H1 (cell line): ENCODE measurements at regions of chr3 and their contacts with region 1.

Region 1: GRCh38 chr3:52934630-52935530 is 37.5 kb upstream of the STIMATE start:
- DNase-seq: peak in 1 of 2 experiments; percentile 1
- H3K4me3 ChIP-seq: no peak overlapping the region
- H3K27ac ChIP-seq: no peak overlapping the region
- H3K4me1 ChIP-seq: no peaks in the 10 kb centered on the region
- H3K27me3 ChIP-seq: no peaks in the 10 kb centered on the region
- CTCF ChIP-seq: peak; percentile 55 to 84 (median 64)
- EP300 ChIP-seq: no peak
- POLR2A ChIP-seq: no peak
- RAD21 ChIP-seq: peak; percentile 51 to 59

Region 2: DNA sequence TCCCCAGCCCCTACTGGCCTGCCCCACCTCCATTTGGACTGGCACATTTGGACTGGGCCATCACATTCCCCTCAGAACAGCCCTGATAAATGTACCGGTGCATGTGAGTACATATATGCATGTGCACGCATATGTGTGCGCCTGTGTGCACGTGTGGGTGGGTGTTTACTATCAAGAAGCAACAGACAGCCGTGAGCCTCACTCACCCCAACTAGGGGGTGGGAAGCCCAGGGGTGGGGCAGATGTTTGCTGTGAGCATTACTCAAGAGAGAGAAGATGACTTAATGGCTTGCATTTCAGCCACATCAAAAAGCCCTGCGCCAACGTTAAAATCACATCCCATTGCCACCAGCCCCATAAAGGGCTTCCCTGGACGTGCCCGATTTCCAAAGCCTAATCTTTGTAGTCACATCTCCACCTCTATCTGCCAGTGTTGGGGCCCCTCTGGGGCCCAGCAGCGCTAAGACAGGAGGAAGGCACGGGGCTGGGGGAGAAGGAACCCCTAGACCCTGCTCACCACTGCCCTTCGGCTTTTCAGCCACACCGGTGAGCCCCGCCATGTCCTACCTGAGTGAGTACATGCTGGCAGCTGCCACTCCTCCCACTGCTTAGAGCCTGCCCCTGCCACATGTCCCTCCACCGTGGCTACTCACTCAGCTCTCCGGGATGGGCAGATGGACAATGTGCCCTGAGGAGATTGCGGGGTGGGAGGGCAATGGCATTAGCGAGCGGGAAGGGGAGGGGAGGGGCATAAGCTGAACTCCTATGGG is 129.4 kb before region 1 on chr3:
- CTCF ChIA-PET with region 1: no interaction called
- POLR2A ChIA-PET with region 1: no interaction called
- DNase-seq: no peak
- H3K4me3 ChIP-seq: no peak overlapping the region
- H3K27ac ChIP-seq: no peak overlapping the region
- H3K4me1 ChIP-seq: no peaks in the 10 kb centered on the region
- H3K27me3 ChIP-seq: no peaks in the 10 kb centered on the region; a peak in 1 of 7 replicates
- CTCF ChIP-seq: no peak
- EP300 ChIP-seq: no peak
- POLR2A ChIP-seq: no peak
- RAD21 ChIP-seq: no peak

Region 3: DNA sequence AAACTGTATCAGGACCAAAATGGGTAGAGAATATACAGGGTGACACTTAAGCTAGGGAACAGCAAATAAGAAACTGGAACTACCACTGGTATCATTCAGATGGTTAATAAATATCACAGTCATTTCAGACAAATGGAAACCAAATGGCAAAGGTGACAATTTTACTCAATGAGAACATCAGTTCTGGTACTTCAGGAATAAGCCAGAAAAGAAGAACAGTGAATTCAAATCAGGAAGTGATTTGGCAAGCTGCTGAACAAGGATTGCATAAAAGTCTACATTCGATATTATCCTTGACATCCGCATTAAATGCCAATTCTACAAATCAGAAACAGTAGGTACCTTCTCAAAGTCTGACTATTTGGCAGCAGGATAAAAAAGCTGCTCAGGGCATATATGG is 14.0 kb before region 1 on chr3:
- CTCF ChIA-PET with region 1: interaction called, 27 read pairs
- POLR2A ChIA-PET with region 1: no interaction called
- DNase-seq: no peak
- H3K4me3 ChIP-seq: no peak overlapping the region
- H3K27ac ChIP-seq: no peak overlapping the region
- H3K4me1 ChIP-seq: no peaks in the 10 kb centered on the region
- H3K27me3 ChIP-seq: no peaks in the 10 kb centered on the region
- CTCF ChIP-seq: no peak
- EP300 ChIP-seq: no peak
- POLR2A ChIP-seq: no peak
- RAD21 ChIP-seq: no peak